Head of caudate nucleus (tissue), 42 donors: ENCODE measurements at regions of chr4 and their contacts with region 1.

Region 1: DNA sequence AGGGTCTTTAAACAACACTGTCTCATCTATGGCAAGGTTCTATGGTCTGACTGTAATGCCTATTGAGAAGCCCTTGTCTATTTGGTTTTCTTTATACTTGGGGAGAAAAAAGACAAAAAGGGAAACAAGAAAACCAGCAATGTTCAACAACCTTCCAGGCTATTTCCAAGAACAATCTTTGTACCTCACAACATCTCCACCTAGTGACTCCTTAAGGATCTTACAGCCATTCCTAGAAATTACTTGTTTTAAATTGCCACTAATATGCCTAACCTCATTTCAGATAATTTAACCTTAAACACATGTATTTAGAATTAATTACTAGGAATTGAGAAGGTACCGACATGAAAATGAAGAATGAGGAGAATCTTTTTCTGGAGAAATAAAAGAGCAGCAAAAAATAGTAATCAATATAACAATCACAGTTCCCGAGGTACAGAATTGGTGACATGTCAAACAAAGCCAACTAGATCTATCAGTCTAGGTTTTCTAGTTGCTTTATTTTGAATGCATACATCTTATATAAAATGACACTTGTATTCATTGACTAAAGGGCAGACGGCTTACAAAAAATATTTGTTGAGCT is 1.6 kb upstream of the RBM46 start:
- DNase-seq: peak in 1 of 42 donors; percentile 20

Region 2: GRCh38 chr4:154569028-154569427 is 210.4 kb before region 1 on chr4:
- intact Hi-C with region 1: no loop called
- DNase-seq: no peak

Region 3: DNA sequence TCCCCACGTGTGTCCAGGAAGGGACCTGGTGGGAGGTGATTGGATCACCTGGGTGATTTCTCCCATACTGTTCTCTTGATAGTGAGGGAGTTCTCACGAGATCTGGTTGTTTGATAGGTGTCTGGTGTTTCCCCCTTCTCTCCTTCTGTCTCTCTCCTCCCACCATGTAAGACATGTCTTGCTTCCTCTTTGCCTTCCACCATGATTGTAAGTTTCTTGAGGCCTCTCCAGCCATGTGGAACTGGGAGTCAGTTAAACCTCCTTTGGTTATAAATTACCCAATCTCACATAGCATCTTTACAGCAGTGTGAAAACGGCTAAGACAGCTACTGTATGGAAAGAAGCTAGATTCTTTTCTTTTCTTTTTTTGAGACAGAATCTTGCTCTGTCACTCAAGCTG is 145.4 kb before region 1 on chr4:
- intact Hi-C with region 1: loop called (anchors 10 kb)
- DNase-seq: no peak